ENCODE measurements at regions of chr2 and their contacts with region 1.

Region 1: GRCh38 chr2:85066874-85067351 is 66.3 kb upstream of the TCF7L1 start:
- DNase-seq: peak; percentile 77 to 87
- ATAC-seq: peak; percentile 88 to 93
- H3K4me3 ChIP-seq: peak overlapping the region; percentile 21; the same call in 2 of the 3 replicates
- H3K27ac ChIP-seq: peak overlapping the region; percentile 45 to 68; a peak in 4 of 6 replicates
- H3K4me1 ChIP-seq: no peaks in the 10 kb centered on the region
- CTCF ChIP-seq: peak; percentile 97
- EP300 ChIP-seq: no peak
- POLR2A ChIP-seq: no peak
- RAD21 ChIP-seq: peak; percentile 94

Region 2: GRCh38 chr2:85032621-85033020 is 34.3 kb before region 1 on chr2:
- CTCF ChIA-PET with region 1: interaction called, 14 read pairs
- POLR2A ChIA-PET with region 1: interaction called, 3 read pairs
- DNase-seq: peak in 1 of 2 experiments; percentile 66
- ATAC-seq: peak in 1 of 2 experiments; percentile 70; a peak in 3 of 6 replicates
- H3K4me3 ChIP-seq: no peak overlapping the region
- H3K27ac ChIP-seq: no peak overlapping the region
- H3K4me1 ChIP-seq: peaks cover 14% of the 10 kb centered on the region
- CTCF ChIP-seq: no peak
- EP300 ChIP-seq: no peak
- POLR2A ChIP-seq: no peak
- RAD21 ChIP-seq: no peak

Region 3: DNA sequence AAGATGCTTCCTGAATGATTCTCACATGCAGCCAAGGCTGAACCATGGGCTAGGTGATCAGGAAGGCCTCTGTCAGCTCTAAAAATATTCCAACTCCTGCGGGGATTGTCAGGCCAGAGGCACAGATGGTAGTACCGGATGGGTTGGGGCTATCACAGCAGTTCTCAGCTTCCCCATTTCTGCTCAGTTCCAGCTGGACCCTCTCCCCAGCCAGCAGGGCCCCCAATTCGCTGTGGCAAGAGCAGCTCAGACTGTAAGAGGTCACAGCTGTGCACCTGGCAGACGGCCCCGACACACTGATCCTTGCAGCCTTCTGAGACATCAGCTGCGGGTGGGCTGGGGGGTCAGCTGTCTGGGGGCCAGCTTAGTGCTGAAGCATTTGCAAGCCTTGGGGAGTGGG is 22.7 kb after region 1 on chr2:
- CTCF ChIA-PET with region 1: interaction called, 25 read pairs
- POLR2A ChIA-PET with region 1: interaction called, 5 read pairs
- DNase-seq: no peak
- ATAC-seq: no peak
- H3K4me3 ChIP-seq: no peak overlapping the region
- H3K27ac ChIP-seq: no peak overlapping the region
- H3K4me1 ChIP-seq: no peaks in the 10 kb centered on the region
- CTCF ChIP-seq: no peak
- EP300 ChIP-seq: no peak
- POLR2A ChIP-seq: no peak
- RAD21 ChIP-seq: no peak

Region 4: GRCh38 chr2:85230679-85231467 is 164.0 kb after region 1 on chr2:
- CTCF ChIA-PET with region 1: interaction called, 10 read pairs
- POLR2A ChIA-PET with region 1: no interaction called
- DNase-seq: no peak
- ATAC-seq: peak; percentile 27 to 66; a peak in 4 of 6 replicates
- H3K4me3 ChIP-seq: no peak overlapping the region
- H3K27ac ChIP-seq: no peak overlapping the region
- H3K4me1 ChIP-seq: no peaks in the 10 kb centered on the region
- CTCF ChIP-seq: no peak
- EP300 ChIP-seq: no peak
- POLR2A ChIP-seq: no peak
- RAD21 ChIP-seq: no peak

Region 5: DNA sequence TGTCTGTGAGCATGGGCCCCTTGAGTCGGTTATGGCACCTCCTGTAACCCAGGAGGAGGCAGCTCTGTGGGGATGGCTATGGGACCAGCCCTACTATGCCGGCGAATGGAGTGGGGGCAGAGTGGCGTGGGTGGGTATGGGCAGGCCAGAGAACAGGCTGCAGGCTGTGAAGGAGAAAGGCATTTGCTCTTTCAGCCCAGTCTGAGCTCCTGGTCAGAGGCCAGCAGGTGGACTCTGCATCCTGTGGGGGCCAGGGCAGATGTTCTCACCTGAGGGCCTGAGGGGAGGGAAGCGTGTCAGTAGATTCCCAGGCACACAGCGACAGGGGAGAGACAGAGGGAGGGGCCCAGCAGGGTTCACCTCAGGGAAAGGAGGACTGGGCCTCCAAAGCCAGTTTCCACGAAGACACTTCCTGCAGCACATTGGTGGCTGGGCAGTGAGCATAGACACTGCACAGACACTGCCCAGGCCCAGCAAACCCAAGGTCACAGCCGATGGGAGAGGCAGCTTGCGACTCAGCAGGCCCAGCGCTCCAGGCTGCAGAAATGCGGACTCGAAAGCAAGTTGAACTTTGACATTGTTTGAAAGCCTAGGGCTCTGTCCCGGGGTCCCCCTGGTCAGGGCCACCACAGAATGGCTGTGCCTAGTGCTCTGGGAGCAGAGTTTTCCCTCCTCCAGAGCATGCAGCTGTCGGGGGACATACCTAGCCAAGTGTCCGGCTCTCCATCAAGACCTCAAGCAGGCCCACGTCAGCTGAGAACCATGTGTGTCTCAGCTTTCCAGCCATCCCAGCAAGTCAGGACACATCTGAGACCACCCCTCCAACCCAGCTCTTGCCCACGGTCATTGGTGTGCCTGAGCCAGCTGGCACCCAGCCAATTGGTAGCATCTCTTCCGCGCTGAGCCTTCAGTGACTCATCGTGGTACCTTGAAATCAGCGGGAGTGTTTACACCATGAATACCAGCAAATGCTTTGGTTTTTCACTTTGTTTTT is 207.1 kb after region 1 on chr2:
- CTCF ChIA-PET with region 1: interaction called, 23 read pairs
- POLR2A ChIA-PET with region 1: no interaction called
- DNase-seq: peak in 1 of 2 experiments; percentile 62
- ATAC-seq: peak; percentile 67 to 69
- H3K4me3 ChIP-seq: no peak overlapping the region
- H3K27ac ChIP-seq: no peak overlapping the region
- H3K4me1 ChIP-seq: peaks cover 13% of the 10 kb centered on the region
- CTCF ChIP-seq: no peak
- EP300 ChIP-seq: no peak
- POLR2A ChIP-seq: no peak
- RAD21 ChIP-seq: no peak

Region 6: DNA sequence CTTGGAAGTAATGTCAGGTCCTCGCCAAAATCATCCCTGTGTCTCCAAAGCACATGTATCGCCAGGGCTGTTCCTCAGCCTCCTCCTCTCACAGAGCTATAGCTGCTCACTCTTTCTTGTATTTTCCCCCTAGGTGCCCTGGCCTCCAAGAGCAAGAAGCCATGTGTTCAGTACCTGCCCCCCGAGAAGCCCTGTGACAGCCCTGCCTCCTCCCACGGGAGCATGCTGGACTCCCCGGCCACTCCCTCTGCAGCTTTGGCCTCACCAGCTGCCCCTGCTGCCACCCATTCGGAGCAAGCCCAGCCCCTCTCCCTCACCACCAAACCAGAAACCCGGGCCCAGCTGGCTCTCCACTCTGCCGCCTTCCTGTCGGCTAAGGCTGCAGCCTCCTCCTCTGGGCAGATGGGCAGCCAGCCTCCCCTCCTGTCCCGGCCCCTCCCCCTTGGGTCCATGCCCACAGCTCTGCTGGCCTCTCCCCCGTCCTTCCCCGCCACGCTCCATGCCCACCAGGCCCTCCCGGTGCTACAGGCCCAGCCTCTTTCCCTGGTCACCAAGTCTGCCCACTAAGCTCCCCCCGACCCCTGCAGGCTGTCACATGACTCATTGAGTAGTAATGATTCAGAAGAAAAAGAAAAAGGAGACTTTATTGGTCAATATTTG is 242.1 kb after region 1 on chr2:
- CTCF ChIA-PET with region 1: interaction called, 371 read pairs
- POLR2A ChIA-PET with region 1: no interaction called
- DNase-seq: no peak
- ATAC-seq: peak; percentile 21 to 35; a peak in 4 of 6 replicates
- H3K4me3 ChIP-seq: no peak overlapping the region
- H3K27ac ChIP-seq: peak overlapping the region in 1 of 2 experiments; percentile 2; a peak in 1 of 6 replicates
- H3K4me1 ChIP-seq: peaks cover 5% of the 10 kb centered on the region; the same call in 1 of the 3 replicates
- CTCF ChIP-seq: no peak
- EP300 ChIP-seq: no peak
- POLR2A ChIP-seq: no peak
- RAD21 ChIP-seq: no peak

Measured in A549 (cell line).